Tibial artery (tissue), 4 donors: ENCODE measurements at regions of chr18 and their contacts with region 1.

Region 1: DNA sequence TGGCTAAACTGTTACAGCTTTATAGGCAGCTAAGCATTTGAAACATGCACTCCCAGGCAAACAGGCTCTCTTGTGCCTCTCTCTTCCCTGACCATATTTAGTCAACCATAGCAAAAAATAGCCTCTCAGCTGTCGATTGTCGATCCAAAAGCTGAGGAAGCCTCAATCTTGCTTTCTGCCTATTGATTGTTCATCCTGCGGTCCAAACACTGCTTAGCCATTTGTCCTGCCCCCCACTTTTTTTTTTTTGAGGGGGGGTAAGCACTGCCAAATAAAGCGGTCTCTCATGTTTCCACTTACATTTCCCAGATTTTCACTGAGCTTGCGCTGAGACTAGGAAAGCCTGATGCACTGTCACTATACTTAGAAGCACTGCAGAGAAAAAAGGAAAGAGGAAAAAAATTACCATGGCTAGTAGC is 90.8 kb downstream of the MIB1 start:
- DNase-seq: peak; percentile 39 to 80
- H3K4me3 ChIP-seq: peak overlapping the region; percentile 41 to 46
- H3K27ac ChIP-seq: peak overlapping the region; percentile 65 to 71
- H3K4me1 ChIP-seq: peaks cover 0 to 59% (median 10%) of the 10 kb centered on the region in 4 donors
- H3K27me3 ChIP-seq: no peaks in the 10 kb centered on the region
- CTCF ChIP-seq: no peak

Region 2: DNA sequence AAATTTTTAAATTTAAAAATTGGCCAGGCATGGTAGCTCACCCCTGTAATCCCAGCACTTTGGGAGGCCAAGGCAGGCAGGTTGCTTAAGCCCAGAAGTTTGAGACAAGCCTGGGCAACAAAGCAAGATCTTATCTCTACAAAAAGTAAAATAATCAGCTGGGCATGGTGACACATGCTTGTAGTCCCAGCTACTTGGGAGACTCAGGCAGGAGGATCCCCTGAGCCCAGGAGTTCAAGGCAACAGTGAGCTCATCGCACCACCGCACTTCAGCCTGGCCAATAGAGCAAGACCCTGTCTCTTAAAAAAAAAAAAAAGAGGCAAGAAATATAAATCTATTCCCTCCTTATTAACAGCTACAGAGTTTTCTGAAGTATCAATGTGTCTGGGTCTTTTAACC is 282.8 kb before region 1 on chr18:
- intact Hi-C with region 1: no loop called
- DNase-seq: no peak
- H3K4me3 ChIP-seq: no peak overlapping the region
- H3K27ac ChIP-seq: no peak overlapping the region
- H3K4me1 ChIP-seq: no peaks in the 10 kb centered on the region
- H3K27me3 ChIP-seq: no peaks in the 10 kb centered on the region
- CTCF ChIP-seq: no peak

Region 3: DNA sequence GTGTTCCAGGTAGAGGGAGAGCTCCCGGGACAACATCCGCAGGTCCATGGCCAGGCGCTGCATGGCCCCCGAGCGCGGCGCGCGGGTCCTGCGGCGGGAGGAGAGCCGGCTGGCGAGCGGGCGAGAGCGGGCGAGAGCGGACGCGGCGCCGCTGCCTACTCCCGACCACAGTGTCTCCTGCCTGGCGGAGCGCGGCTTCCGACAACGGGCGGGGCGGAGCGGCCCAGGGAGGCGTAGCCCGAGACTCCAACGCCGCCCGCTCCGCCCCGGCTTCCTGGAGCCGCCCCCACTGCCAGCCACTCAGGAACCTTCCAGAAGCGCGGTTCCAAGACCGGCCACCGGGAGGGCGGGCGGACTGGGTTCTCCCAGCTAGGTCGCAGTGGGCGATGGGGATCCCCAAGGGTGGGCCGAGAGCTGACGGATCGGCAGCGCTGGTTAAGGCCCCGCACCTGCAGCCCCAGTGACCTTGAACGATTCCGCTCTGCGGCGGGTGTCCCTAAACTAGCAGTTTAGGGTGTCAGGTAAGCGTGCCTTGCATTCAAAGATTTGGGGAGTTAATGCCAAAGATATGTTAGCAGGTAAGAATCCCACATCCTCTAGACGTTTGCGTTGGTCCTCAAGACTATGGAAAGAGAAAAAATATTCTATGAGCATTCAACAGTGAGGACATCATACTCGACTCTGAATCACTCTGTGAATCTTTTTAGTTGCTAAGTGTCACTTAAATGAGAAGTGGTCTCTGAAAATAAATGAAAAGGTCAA is 126.6 kb before region 1 on chr18 and contains the start of gene ABHD3:
- intact Hi-C with region 1: loop called (anchors 10 kb)
- DNase-seq: peak; percentile 92 to 97
- H3K4me3 ChIP-seq: peak within 1 kb of the TSS; percentile 87 to 93
- H3K27ac ChIP-seq: peak within 1 kb of the TSS; percentile 91 to 93
- H3K4me1 ChIP-seq: peaks cover 0 to 20% (median 11%) of the 10 kb centered on the region in 4 donors
- H3K27me3 ChIP-seq: no peaks in the 10 kb centered on the region
- CTCF ChIP-seq: peak; percentile 66 to 69

Region 4: GRCh38 chr18:21740724-21741510 is 90.5 kb before region 1 on chr18 and contains the start of gene MIB1:
- intact Hi-C with region 1: no loop called
- DNase-seq: peak; percentile 45 to 80
- H3K4me3 ChIP-seq: peak within 1 kb of the TSS; percentile 95 to 98
- H3K27ac ChIP-seq: peak within 1 kb of the TSS; percentile 99
- H3K4me1 ChIP-seq: peaks cover 0 to 38% (median 11%) of the 10 kb centered on the region in 4 donors
- H3K27me3 ChIP-seq: no peaks in the 10 kb centered on the region
- CTCF ChIP-seq: no peak

Region 5: DNA sequence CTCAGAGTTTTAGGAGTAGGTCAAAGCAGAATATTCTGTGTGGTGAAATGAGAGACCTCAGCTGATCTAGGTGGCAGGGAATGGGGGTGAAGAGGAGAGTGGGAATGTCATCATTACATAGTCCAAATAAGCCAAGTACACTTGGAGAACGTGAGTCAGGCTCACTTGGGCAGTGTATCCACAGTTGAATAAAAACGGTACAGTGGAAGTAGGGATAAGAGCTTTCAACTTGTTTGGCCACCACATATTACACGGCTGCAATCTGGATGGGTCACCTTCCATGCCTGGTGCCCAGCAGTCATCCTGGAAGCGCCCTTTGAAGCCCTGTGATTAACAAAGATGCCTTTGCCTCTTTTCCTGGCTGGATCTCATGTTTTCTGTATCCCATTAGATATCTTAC is 62.2 kb before region 1 on chr18:
- intact Hi-C with region 1: no loop called
- DNase-seq: no peak
- H3K4me3 ChIP-seq: no peak overlapping the region
- H3K27ac ChIP-seq: no peak overlapping the region
- H3K4me1 ChIP-seq: peaks cover 0 to 5% (median 0%) of the 10 kb centered on the region in 4 donors
- H3K27me3 ChIP-seq: no peaks in the 10 kb centered on the region
- CTCF ChIP-seq: no peak

Region 6: GRCh38 chr18:22136395-22136794 is 305.0 kb after region 1 on chr18:
- intact Hi-C with region 1: no loop called
- DNase-seq: no peak
- H3K4me3 ChIP-seq: no peak overlapping the region
- H3K27ac ChIP-seq: no peak overlapping the region
- H3K4me1 ChIP-seq: no peaks in the 10 kb centered on the region
- H3K27me3 ChIP-seq: no peaks in the 10 kb centered on the region
- CTCF ChIP-seq: no peak